ENCODE measurements at regions of chr7 and their contacts with region 1.

Region 1: GRCh38 chr7:78134256-78134655 is 335.7 kb downstream of the PHTF2 start:
- DNase-seq: no peak
- H3K4me3 ChIP-seq: no peak overlapping the region
- H3K27ac ChIP-seq: no peak overlapping the region
- H3K4me1 ChIP-seq: peaks cover 0 to 7% (median 0%) of the 10 kb centered on the region in 4 experiments; a peak in 3 of 7 replicates
- H3K27me3 ChIP-seq: no peaks in the 10 kb centered on the region
- CTCF ChIP-seq: peak in 2 of 3 experiments; percentile 53 to 61; a peak in 3 of 4 replicates
- EP300 ChIP-seq: no peak
- POLR2A ChIP-seq: no peak
- RAD21 ChIP-seq: peak; percentile 74 to 77

Region 2: DNA sequence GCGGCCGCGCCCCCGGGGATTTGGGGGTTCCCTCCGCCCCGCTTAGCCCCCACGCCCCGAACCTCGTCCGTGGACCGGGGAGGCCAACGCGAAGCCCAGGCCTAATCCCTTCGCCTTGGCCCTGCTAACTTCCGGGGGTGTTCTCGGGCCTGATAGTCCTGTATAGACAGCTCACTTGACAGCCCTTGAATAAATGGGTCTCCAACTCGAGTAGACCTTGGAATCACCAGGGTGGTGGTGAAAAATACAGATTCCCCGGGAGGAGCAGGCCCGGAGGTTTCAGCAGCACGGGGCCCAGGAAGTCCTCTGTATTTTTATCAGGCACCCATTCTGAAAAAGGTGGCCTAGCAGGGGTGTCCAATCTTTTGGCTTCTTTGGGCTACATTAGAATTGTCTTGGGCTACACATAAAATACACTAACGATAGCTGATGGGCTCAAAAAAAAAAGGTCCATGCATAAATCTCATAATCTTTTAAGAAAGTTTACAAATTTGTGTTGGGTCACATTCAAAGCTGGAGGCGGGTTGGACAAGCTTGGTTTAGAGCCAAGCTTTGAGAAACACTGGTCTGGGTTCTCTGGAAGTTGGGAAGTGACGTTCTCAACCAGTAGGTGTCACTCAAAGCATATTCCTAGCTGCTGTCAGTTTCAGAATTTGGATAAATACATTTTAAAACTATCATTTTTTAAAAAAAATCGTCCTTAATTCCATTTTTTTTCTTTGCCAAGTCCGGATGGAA is 114.0 kb before region 1 on chr7:
- CTCF ChIA-PET with region 1: interaction called, 15 read pairs
- POLR2A ChIA-PET with region 1: no interaction called
- DNase-seq: peak in 1 of 2 experiments; percentile 54
- H3K4me3 ChIP-seq: peak overlapping the region in 2 of 4 experiments; percentile 51 to 74; a peak in 4 of 8 replicates
- H3K27ac ChIP-seq: no peak overlapping the region
- H3K4me1 ChIP-seq: peaks cover 0 to 11% (median 3%) of the 10 kb centered on the region in 4 experiments; a peak in 4 of 7 replicates
- H3K27me3 ChIP-seq: peaks cover 2 to 10% (median 4%) of the 10 kb centered on the region in 4 experiments; a peak in 5 of 7 replicates
- CTCF ChIP-seq: peak in 2 of 3 experiments; percentile 62 to 67; a peak in 3 of 4 replicates
- EP300 ChIP-seq: no peak
- POLR2A ChIP-seq: no peak
- RAD21 ChIP-seq: peak; percentile 80 to 82

Region 3: DNA sequence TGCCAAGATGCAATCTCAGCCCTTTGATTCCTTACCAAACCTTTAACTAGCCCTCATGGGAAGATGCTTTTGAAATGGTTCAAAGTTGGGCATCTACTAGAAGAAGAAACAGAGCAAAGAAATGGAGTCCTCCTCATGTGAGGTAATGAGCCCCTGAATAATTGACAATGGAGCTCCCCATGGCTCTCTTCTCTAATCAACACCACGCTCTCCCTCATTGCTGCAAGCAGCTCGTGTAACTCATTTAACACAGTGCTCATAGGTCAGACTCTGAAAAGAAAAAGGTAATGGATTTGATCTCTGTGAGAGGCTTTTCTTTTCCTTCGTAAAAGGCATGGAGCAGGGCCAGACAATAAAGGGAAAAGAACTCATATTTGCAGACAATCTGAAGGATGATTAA is 22.9 kb before region 1 on chr7:
- CTCF ChIA-PET with region 1: interaction called, 17 read pairs
- POLR2A ChIA-PET with region 1: no interaction called
- DNase-seq: no peak
- H3K4me3 ChIP-seq: peak overlapping the region in 1 of 4 experiments; percentile 12; a peak in 1 of 8 replicates
- H3K27ac ChIP-seq: no peak overlapping the region
- H3K4me1 ChIP-seq: peaks cover 3 to 19% (median 13%) of the 10 kb centered on the region in 4 experiments; a peak in 6 of 7 replicates
- H3K27me3 ChIP-seq: no peaks in the 10 kb centered on the region
- CTCF ChIP-seq: no peak
- EP300 ChIP-seq: no peak
- POLR2A ChIP-seq: no peak
- RAD21 ChIP-seq: no peak

Region 4: GRCh38 chr7:78151229-78151628 is 17.0 kb after region 1 on chr7:
- CTCF ChIA-PET with region 1: interaction called, 21 read pairs
- POLR2A ChIA-PET with region 1: no interaction called
- DNase-seq: no peak
- H3K4me3 ChIP-seq: no peak overlapping the region
- H3K27ac ChIP-seq: no peak overlapping the region
- H3K4me1 ChIP-seq: no peaks in the 10 kb centered on the region
- H3K27me3 ChIP-seq: no peaks in the 10 kb centered on the region
- CTCF ChIP-seq: no peak
- EP300 ChIP-seq: no peak
- POLR2A ChIP-seq: no peak
- RAD21 ChIP-seq: no peak

Region 5: DNA sequence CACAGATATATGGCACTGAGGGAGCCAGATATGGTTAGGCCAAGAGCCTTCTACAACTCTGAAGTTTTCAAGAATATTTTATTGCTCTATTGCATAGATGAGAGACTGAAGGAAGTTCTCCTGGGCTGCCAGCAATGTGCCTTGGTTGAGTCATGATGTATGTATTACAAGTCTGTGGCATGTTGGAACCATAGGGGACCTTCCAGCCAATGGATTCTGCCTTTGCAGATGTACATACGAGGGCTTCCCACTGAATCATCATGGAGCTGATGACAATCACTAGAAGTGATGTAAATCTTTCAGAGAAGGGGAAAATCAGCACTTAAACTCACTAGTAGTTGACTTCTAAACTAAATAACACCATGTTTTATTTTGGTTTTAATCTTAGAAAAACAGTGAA is 83.8 kb after region 1 on chr7:
- CTCF ChIA-PET with region 1: interaction called, 44 read pairs
- POLR2A ChIA-PET with region 1: no interaction called
- DNase-seq: no peak
- H3K4me3 ChIP-seq: no peak overlapping the region
- H3K27ac ChIP-seq: no peak overlapping the region
- H3K4me1 ChIP-seq: peaks cover 0 to 9% (median 2%) of the 10 kb centered on the region in 4 experiments; a peak in 2 of 7 replicates
- H3K27me3 ChIP-seq: no peaks in the 10 kb centered on the region
- CTCF ChIP-seq: no peak
- EP300 ChIP-seq: no peak
- POLR2A ChIP-seq: no peak
- RAD21 ChIP-seq: no peak

Region 6: DNA sequence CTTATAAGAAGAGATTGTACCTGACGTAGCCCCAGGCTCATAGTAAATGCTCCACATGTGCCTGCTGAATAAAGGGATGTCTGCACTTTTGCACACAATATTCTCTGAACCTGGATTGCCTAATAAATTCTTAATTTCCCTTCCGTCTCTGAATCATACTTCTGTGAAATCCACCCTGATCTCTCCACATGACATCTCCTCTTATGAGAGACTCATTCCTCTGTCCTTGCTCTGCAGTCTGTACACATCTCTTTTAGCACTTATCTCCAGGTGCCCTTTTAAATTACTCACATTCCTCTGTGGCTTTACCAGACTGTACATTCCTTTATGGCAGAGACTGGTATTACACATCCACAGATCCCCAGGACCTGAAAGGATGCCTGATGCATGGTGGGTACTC is 191.9 kb after region 1 on chr7:
- CTCF ChIA-PET with region 1: no interaction called
- POLR2A ChIA-PET with region 1: no interaction called
- DNase-seq: no peak
- H3K4me3 ChIP-seq: no peak overlapping the region
- H3K27ac ChIP-seq: no peak overlapping the region
- H3K4me1 ChIP-seq: no peaks in the 10 kb centered on the region
- H3K27me3 ChIP-seq: no peaks in the 10 kb centered on the region
- CTCF ChIP-seq: no peak
- EP300 ChIP-seq: no peak
- POLR2A ChIP-seq: no peak
- RAD21 ChIP-seq: no peak

Region 7: GRCh38 chr7:78345979-78346378 is 211.7 kb after region 1 on chr7:
- CTCF ChIA-PET with region 1: no interaction called
- POLR2A ChIA-PET with region 1: no interaction called
- DNase-seq: no peak
- H3K4me3 ChIP-seq: no peak overlapping the region
- H3K27ac ChIP-seq: no peak overlapping the region
- H3K4me1 ChIP-seq: peaks cover 0 to 3% (median 0%) of the 10 kb centered on the region in 4 experiments; a peak in 2 of 7 replicates
- H3K27me3 ChIP-seq: no peaks in the 10 kb centered on the region
- CTCF ChIP-seq: no peak
- EP300 ChIP-seq: no peak
- POLR2A ChIP-seq: no peak
- RAD21 ChIP-seq: no peak

Measured in H1 (cell line).